PC-9 (cell line): ENCODE measurements at regions of chrX and their contacts with region 1.

Region 1: DNA sequence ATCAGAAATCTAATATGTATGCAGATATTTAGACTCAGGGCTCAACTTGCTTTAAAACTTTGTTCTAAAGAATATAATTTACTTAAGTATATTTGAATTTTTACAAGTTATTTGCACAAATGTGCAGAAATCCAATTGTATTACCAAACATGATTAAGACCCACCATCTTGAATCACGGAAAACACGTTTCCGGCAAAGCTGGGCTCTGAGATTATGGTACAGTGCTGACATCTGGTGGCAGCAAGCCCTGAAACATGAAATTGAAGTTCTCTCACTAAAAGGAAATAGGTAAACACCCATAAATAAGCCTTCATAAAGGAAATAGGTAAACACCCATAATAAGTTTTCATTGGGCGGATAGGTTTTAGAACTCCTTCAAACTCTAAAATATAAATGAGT is 98.3 kb upstream of the MAOA start:
- DNase-seq: peak in 1 of 2 experiments; percentile 6
- H3K4me3 ChIP-seq: no peak overlapping the region
- H3K27ac ChIP-seq: no peak overlapping the region
- H3K4me1 ChIP-seq: no peaks in the 10 kb centered on the region; the same call in 1 of the 2 replicates
- H3K27me3 ChIP-seq: no peaks in the 10 kb centered on the region
- CTCF ChIP-seq: peak; percentile 65

Region 2: DNA sequence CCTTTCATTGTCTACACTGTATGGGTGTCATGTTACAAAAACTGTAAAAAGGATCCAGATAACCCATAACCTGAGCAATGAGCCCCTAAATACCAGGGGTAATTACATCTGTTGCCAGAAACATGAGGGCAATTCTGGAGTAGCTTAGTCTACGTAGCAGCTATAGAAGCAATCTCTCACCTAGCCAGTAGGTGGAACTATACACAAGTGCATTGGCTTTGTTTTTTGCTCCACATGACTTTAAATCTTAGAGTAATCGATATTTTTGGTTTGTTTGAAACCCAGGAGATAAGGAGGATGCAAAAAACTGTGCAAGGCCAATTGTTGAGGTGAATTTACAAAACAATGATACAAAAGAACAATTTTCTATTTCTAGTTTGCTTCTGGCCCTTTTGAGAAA is 1776.3 kb before region 1 on chrX:
- CTCF ChIA-PET with region 1: no interaction called
- POLR2A ChIA-PET with region 1: no interaction called
- intact Hi-C with region 1: loop called (anchors 5 kb)
- DNase-seq: peak in 1 of 2 experiments; percentile 34
- H3K4me3 ChIP-seq: no peak overlapping the region
- H3K27ac ChIP-seq: no peak overlapping the region
- H3K4me1 ChIP-seq: 0 out of 2 replicates have a peak, but pooled peaks cover 6% of the 10 kb centered on the region
- H3K27me3 ChIP-seq: no peaks in the 10 kb centered on the region
- CTCF ChIP-seq: peak; percentile 68

Region 3: DNA sequence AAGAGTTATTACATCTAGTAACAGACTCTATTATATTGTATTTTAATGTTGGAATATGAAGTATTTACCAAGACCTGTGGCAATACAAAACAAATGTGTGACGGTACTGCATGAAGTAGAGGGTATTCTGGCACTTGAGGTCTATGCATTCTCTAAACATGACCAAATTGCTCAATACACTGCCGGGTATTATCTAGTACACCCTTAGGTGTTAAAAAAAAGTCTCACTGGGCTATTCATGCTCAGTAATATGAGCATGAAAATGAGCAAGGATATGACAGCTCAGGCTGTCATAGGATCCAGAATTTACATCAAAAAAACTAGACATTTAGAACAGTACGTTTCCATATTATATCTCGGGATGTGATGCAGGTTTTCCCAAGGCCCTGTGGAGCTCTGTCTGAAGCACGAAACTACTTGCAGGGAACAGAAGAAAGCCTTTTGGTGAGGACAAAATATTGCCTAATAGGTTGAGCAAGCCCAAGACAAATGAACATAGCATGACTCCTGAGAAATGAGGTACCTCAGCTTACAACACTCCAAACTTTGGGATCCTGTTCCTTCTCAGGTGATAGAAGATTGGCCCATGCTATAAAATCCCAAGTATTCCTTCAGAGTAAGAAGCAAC is 24.2 kb after region 1 on chrX:
- CTCF ChIA-PET with region 1: no interaction called
- POLR2A ChIA-PET with region 1: no interaction called
- intact Hi-C with region 1: no loop called
- DNase-seq: no peak
- H3K4me3 ChIP-seq: no peak overlapping the region
- H3K27ac ChIP-seq: no peak overlapping the region
- H3K4me1 ChIP-seq: no peaks in the 10 kb centered on the region
- H3K27me3 ChIP-seq: no peaks in the 10 kb centered on the region
- CTCF ChIP-seq: no peak

Region 4: DNA sequence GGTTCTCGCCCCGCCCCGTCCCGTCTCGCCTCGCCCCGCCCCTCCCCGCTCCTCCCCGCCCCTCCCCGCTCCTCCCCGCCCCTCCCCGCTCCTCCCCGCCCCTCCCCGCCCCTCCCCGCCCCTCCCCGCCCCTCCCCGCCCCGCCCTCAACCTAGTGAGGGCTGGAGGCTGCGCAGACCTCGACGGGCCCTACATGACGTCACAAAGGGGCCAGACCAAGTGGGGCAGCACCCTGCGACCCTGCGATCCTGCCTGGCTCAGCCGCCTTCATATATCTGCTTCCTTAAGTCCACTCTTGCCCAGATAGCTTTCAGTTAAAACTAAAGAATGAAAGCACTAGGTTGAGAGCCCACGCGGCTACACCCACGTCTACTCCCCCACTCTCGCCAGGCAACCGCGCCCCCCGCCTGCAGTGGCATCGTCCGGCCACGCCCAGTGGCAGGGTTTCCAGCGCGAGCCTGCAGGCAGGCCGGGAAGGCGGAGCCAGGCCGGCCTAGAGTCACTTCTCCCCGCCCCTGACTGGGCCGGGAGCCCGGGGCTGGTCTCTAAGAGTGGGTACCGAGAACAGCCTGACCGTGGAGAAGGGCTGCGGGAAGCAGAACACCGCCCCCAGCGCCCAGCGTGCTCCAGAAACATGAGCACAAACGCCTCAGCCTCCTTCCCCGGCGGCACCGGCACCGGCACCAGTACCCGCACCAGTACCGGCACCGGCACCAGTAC is 96.8 kb after region 1 on chrX:
- CTCF ChIA-PET with region 1: no interaction called
- POLR2A ChIA-PET with region 1: no interaction called
- intact Hi-C with region 1: loop called (anchors 10 kb)
- DNase-seq: peak; percentile 71 to 79
- H3K4me3 ChIP-seq: peak overlapping the region; percentile 56
- H3K27ac ChIP-seq: peak overlapping the region; percentile 80
- H3K4me1 ChIP-seq: no peaks in the 10 kb centered on the region
- H3K27me3 ChIP-seq: no peaks in the 10 kb centered on the region
- CTCF ChIP-seq: no peak; the same call in 1 of the 2 replicates

Region 5: GRCh38 chrX:43750248-43750676 is 192.5 kb after region 1 on chrX:
- CTCF ChIA-PET with region 1: no interaction called
- POLR2A ChIA-PET with region 1: no interaction called
- intact Hi-C with region 1: loop called (anchors 1 kb)
- DNase-seq: peak; percentile 10 to 35
- H3K4me3 ChIP-seq: no peak overlapping the region
- H3K27ac ChIP-seq: no peak overlapping the region
- H3K4me1 ChIP-seq: no peaks in the 10 kb centered on the region
- H3K27me3 ChIP-seq: no peaks in the 10 kb centered on the region
- CTCF ChIP-seq: peak; percentile 56

Region 6: GRCh38 chrX:43773298-43773697 is 215.5 kb after region 1 on chrX:
- CTCF ChIA-PET with region 1: no interaction called
- POLR2A ChIA-PET with region 1: no interaction called
- intact Hi-C with region 1: no loop called
- DNase-seq: no peak
- H3K4me3 ChIP-seq: no peak overlapping the region
- H3K27ac ChIP-seq: no peak overlapping the region
- H3K4me1 ChIP-seq: no peaks in the 10 kb centered on the region
- H3K27me3 ChIP-seq: no peaks in the 10 kb centered on the region
- CTCF ChIP-seq: no peak

Region 7: GRCh38 chrX:43939187-43939926 is 381.6 kb after region 1 on chrX:
- CTCF ChIA-PET with region 1: no interaction called
- POLR2A ChIA-PET with region 1: no interaction called
- intact Hi-C with region 1: loop called (anchors 10 kb)
- DNase-seq: no peak
- H3K4me3 ChIP-seq: no peak overlapping the region
- H3K27ac ChIP-seq: no peak overlapping the region
- H3K4me1 ChIP-seq: no peaks in the 10 kb centered on the region
- H3K27me3 ChIP-seq: no peaks in the 10 kb centered on the region
- CTCF ChIP-seq: no peak